PC-9 (cell line): ENCODE measurements at regions of chr4 and their contacts with region 1.

Region 1: DNA sequence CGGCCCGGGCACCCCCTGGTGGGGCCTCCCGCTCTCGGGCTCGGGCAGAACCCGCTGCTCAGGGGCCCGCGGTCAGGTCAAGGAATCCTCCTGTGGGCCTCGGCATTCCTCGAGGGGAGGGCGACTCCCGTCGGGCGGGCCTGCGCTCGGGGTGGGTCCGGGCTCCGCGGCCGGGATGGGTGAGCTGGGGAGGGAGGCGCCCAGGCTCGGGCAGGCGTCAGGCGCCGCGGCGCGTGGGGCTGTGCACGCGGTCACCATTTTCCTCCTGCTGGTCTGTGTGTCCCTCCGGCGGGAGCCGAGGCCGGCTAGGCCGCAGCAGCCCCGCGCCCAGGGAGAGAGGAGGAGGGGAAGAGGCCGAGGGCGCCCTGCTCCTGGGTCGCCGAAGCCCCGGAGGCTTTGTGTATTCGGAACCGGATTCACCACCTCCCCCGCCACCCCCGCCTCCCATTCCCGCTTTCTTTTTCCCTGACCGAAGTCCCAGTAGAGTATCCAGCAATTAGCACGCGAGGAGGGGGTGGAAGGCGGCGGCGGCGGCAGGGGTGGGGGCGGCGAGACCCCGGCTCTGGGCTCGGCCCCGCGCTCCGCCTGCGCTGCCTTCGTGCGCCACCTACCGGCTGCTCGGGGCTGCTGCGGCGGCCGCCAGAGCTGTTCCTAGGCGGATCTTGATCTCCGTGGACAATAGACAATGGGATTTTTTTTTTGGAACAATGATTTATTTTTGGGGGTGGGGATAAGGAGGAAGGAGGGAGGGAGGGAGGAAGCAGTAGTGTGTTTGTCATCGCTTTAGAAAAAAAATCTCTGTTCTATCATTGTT is 99.0 kb upstream of the MAML3 start:
- DNase-seq: peak; percentile 40 to 76
- H3K4me3 ChIP-seq: peak overlapping the region; percentile 59
- H3K27ac ChIP-seq: peak overlapping the region; percentile 73
- H3K4me1 ChIP-seq: peaks cover 69% of the 10 kb centered on the region
- H3K27me3 ChIP-seq: no peaks in the 10 kb centered on the region
- CTCF ChIP-seq: peak; percentile 84

Region 2: GRCh38 chr4:139532947-139533346 is 720.0 kb before region 1 on chr4:
- CTCF ChIA-PET with region 1: no interaction called
- POLR2A ChIA-PET with region 1: no interaction called
- intact Hi-C with region 1: no loop called
- DNase-seq: no peak
- H3K4me3 ChIP-seq: no peak overlapping the region
- H3K27ac ChIP-seq: no peak overlapping the region
- H3K4me1 ChIP-seq: no peaks in the 10 kb centered on the region
- H3K27me3 ChIP-seq: no peaks in the 10 kb centered on the region
- CTCF ChIP-seq: no peak

Region 3: DNA sequence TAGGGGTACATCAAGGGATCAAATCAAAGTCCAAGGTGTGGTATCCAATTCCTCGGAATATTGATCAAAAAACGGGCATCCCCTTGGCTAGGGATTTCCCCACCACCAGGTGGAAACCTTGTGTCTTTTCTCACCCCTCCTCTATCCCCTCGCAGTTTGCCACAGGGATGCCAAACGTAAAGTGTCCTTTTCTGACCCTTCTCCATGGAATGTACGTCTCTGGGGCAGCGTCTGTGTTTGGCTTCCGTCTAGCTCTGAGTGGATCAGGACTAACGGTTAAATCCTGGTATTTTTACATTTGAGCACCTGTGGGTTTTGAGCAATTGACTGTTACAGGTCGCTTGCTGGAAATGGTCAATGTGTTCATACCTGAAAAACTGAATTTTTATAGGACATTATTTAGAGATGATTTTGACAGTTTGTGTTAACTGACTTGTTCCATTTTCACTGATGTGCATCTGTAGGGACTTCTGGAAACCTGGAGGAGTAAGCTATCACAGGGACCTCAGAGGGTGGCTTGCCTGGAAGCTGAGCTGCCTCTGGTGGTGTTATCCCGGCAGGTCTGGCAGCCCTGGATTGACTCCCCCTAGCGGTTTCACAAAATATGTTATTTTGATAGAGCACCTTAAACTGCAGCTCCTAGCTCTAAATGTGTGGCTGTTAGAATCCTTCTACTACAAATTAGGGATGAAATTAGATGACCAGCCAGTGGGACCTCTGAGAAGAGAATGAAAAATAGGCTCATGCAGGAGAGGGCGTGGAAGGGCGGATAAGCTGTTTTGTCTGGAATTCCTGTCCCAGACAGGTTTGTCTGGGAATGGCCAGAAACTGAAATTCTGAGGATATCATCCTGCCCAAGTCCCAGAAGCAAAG is 596.1 kb before region 1 on chr4:
- CTCF ChIA-PET with region 1: no interaction called
- POLR2A ChIA-PET with region 1: no interaction called
- intact Hi-C with region 1: loop called (anchors 5 kb)
- DNase-seq: peak in 1 of 2 experiments; percentile 53
- H3K4me3 ChIP-seq: no peak overlapping the region
- H3K27ac ChIP-seq: no peak overlapping the region
- H3K4me1 ChIP-seq: peaks cover 19% of the 10 kb centered on the region
- H3K27me3 ChIP-seq: no peaks in the 10 kb centered on the region
- CTCF ChIP-seq: peak; percentile 85

Region 4: DNA sequence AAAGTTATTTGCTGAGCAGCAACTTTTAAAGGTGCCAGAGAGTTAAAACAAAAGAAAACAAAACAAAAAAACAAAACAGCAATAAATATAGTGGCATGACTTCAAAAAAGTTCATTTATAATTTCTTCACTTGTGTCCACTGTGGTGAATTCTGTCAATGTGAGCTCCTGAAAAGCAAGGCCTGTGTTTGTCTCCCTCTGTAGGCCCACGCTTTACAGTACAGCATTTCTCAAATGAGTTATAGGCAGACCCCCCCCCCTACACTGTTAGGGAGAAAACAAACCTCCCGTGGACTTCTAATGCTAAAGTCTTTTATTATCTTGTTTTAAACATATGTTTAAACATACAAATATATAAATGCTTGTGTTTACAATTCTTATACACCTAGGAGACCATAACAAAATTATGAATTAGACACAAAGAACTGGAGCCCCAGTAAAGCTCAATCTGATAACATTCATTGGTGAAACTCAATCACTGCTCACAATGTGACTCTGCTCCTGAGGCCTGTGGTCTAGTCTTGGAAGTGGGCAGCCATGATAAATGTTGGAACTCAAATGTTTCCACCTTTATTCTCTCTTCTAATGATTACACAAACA is 73.5 kb after region 1 on chr4:
- CTCF ChIA-PET with region 1: interaction called, 4 read pairs
- POLR2A ChIA-PET with region 1: no interaction called
- intact Hi-C with region 1: loop called (anchors 1 kb)
- DNase-seq: peak in 1 of 2 experiments; percentile 25
- H3K4me3 ChIP-seq: no peak overlapping the region
- H3K27ac ChIP-seq: no peak overlapping the region
- H3K4me1 ChIP-seq: no peaks in the 10 kb centered on the region
- H3K27me3 ChIP-seq: no peaks in the 10 kb centered on the region
- CTCF ChIP-seq: peak; percentile 55